Naive thymus-derived CD4-positive, alpha-beta T cell (primary cell): ENCODE measurements at regions of chr3 and their contacts with region 1.

Region 1: DNA sequence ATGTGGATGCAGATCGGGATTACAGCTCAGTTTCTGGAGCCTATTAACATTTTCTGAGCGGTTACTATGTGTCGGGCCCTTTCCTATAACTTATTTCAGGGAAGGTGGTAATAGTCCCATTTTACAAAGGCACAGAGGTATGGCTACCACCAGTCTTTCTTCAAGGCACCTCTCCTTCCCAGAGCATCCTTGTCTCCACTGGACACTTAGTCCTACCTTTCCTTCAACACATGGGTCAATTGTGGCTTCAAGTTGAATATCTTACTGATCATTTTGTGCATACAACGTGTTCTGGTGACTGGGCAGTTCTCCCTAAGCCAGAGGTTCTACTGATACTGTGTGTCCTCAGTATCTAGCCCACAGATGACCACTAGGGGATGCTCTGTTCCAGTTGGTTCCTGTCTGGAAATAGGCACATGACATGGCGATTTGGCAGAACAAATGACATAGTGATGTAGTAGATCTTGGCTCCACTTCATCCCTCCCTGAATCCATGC is 60.7 kb upstream of the CMTM8 start:
- DNase-seq: peak in 8 of 9 donors; percentile 15 to 45 (median 36)
- ATAC-seq: peak; percentile 85
- H3K4me3 ChIP-seq: no peak overlapping the region
- H3K4me3 Mint-ChIP-seq: peak overlapping the region in 9 of 10 donors; percentile 37 to 78 (median 53)
- H3K27ac ChIP-seq: no peak overlapping the region
- H3K27ac Mint-ChIP-seq: peak overlapping the region in 4 of 9 donors; percentile 11 to 83 (median 50)
- H3K4me1 ChIP-seq: peaks cover 0 to 6% of the 10 kb centered on the region in 2 donors
- H3K4me1 Mint-ChIP-seq: peaks cover 8 to 16% (median 14%) of the 10 kb centered on the region in 7 donors
- H3K27me3 ChIP-seq: no peaks in the 10 kb centered on the region
- H3K27me3 Mint-ChIP-seq: peaks cover 0 to 15% (median 0%) of the 10 kb centered on the region in 5 donors

Region 2: DNA sequence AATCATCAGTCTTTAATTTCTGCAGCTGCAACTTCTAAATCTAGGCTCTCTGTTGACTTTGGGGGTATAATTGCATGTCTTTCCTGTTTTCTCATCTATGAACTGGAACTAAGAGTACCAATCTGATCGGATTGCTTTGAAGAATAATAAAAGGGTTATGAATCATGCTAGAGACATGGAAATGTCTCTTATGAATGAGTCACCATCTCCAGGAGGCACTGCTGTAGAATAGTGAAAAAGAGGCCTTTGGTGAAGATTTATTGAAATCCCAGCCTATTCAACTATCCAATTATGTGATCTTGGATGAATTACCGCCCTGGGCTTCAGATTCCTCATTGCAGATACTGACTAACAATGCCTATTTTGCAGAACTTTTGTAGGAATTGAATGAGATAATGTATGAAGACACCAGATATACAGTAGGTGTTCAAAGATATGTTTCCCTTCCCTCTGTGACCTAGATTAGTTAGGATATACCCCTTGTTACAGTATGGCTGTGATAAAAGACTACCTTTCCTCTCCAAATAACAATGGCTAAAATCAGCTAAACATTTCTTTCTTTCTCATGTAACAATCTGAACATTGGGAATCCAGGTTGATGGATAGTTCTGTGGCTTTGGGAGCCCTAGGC is 49.2 kb after region 1 on chr3:
- CTCF ChIA-PET with region 1: no interaction called
- POLR2A ChIA-PET with region 1: no interaction called
- intact Hi-C with region 1: no loop called
- DNase-seq: no peak
- ATAC-seq: no peak
- H3K4me3 ChIP-seq: no peak overlapping the region
- H3K4me3 Mint-ChIP-seq: no peak overlapping the region
- H3K27ac ChIP-seq: no peak overlapping the region
- H3K27ac Mint-ChIP-seq: no peak overlapping the region
- H3K4me1 ChIP-seq: no peaks in the 10 kb centered on the region
- H3K4me1 Mint-ChIP-seq: peaks cover 0 to 5% (median 2%) of the 10 kb centered on the region in 7 donors
- H3K27me3 ChIP-seq: no peaks in the 10 kb centered on the region
- H3K27me3 Mint-ChIP-seq: peaks cover 0 to 12% (median 0%) of the 10 kb centered on the region in 5 donors

Region 3: GRCh38 chr3:32285891-32286290 is 108.1 kb after region 1 on chr3:
- CTCF ChIA-PET with region 1: interaction called, 11 read pairs
- POLR2A ChIA-PET with region 1: no interaction called
- intact Hi-C with region 1: loop called in 1 of 2 experiments (anchors 1 kb)
- DNase-seq: no peak
- ATAC-seq: peak; percentile 11
- H3K4me3 ChIP-seq: no peak overlapping the region
- H3K4me3 Mint-ChIP-seq: peak overlapping the region in 8 of 10 donors; percentile 22 to 73 (median 56)
- H3K27ac ChIP-seq: peak overlapping the region; percentile 45
- H3K27ac Mint-ChIP-seq: peak overlapping the region; percentile 72 to 94 (median 78)
- H3K4me1 ChIP-seq: peaks cover 0 to 12% of the 10 kb centered on the region in 2 donors
- H3K4me1 Mint-ChIP-seq: peaks cover 19 to 65% (median 38%) of the 10 kb centered on the region in 7 donors
- H3K27me3 ChIP-seq: no peaks in the 10 kb centered on the region
- H3K27me3 Mint-ChIP-seq: no peaks in the 10 kb centered on the region

Region 4: DNA sequence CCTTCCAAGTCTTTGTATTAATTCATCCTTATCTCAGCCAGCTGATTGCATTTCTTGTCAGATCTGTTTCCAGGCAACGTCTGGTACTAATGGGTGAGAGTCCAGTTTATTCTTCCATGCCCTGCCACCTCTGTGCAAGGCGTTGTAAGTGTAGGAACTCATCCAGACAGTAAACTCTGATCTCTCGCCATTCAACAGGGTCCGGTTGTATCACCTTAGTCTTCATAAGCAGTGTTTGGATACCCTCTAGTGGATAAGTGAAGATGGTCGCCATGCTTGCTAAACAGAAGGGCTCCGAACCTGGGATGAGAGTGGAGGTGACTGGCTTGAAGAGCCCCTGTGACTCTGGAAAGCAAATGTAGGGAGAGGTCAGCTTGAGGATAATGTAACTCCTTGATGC is 162.3 kb after region 1 on chr3:
- CTCF ChIA-PET with region 1: interaction called, 42 read pairs
- POLR2A ChIA-PET with region 1: no interaction called
- intact Hi-C with region 1: loop called (anchors 1 kb)
- DNase-seq: peak in 7 of 9 donors; percentile 31 to 65 (median 56)
- ATAC-seq: peak; percentile 77
- H3K4me3 ChIP-seq: no peak overlapping the region
- H3K4me3 Mint-ChIP-seq: no peak overlapping the region
- H3K27ac ChIP-seq: no peak overlapping the region
- H3K27ac Mint-ChIP-seq: no peak overlapping the region
- H3K4me1 ChIP-seq: peaks cover 0 to 18% of the 10 kb centered on the region in 2 donors
- H3K4me1 Mint-ChIP-seq: peaks cover 18 to 30% (median 27%) of the 10 kb centered on the region in 7 donors
- H3K27me3 ChIP-seq: no peaks in the 10 kb centered on the region
- H3K27me3 Mint-ChIP-seq: no peaks in the 10 kb centered on the region

Region 5: GRCh38 chr3:32467333-32468070 is 289.8 kb after region 1 on chr3:
- CTCF ChIA-PET with region 1: interaction called, 10 read pairs
- POLR2A ChIA-PET with region 1: no interaction called
- intact Hi-C with region 1: loop called (anchors 1 to 2 kb)
- DNase-seq: peak; percentile 59 to 89 (median 78)
- ATAC-seq: peak; percentile 94
- H3K4me3 ChIP-seq: peak overlapping the region; percentile 66
- H3K4me3 Mint-ChIP-seq: peak overlapping the region; percentile 39 to 81 (median 68)
- H3K27ac ChIP-seq: peak overlapping the region; percentile 81
- H3K27ac Mint-ChIP-seq: peak overlapping the region in 7 of 9 donors; percentile 25 to 93 (median 85)
- H3K4me1 ChIP-seq: peaks cover 14 to 25% of the 10 kb centered on the region in 2 donors
- H3K4me1 Mint-ChIP-seq: peaks cover 19 to 62% (median 49%) of the 10 kb centered on the region in 7 donors
- H3K27me3 ChIP-seq: no peaks in the 10 kb centered on the region
- H3K27me3 Mint-ChIP-seq: no peaks in the 10 kb centered on the region

Region 6: DNA sequence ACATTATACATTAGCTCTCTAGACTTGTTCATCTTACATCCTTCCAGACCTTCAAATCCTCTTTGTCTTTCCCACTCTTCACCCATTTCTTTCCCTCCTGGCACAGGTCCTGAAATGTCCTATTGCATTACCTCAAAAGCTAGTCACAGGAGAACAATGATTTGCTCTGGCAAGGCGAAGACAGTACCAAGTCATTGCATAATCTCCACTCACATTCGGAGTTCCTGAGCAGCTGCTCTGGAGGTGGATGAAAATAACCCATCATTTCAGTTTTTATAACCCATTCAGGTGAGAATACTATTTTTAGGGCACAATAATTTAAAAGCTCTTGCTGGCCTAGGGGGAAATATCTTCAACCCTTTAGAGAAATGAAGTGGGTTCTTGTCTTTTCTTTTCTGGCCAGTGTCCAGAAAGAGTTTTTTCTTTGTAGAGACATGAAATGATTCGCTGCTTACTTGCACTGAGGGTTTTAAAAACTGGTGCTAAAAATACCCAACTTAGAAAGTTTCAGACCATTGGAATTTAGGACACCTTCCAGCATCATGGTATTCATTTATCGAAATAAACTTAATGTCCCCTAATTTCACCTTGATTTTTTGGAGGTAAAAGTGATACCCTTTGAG is 416.3 kb after region 1 on chr3:
- CTCF ChIA-PET with region 1: interaction called, 3 read pairs
- POLR2A ChIA-PET with region 1: no interaction called
- intact Hi-C with region 1: loop called in 1 of 2 experiments (anchors 1 kb)
- DNase-seq: no peak
- ATAC-seq: no peak
- H3K4me3 ChIP-seq: no peak overlapping the region
- H3K4me3 Mint-ChIP-seq: no peak overlapping the region
- H3K27ac ChIP-seq: no peak overlapping the region
- H3K27ac Mint-ChIP-seq: no peak overlapping the region
- H3K4me1 ChIP-seq: no peaks in the 10 kb centered on the region
- H3K4me1 Mint-ChIP-seq: peaks cover 0 to 6% (median 0%) of the 10 kb centered on the region in 7 donors
- H3K27me3 ChIP-seq: no peaks in the 10 kb centered on the region
- H3K27me3 Mint-ChIP-seq: peaks cover 0 to 32% (median 8%) of the 10 kb centered on the region in 5 donors